ENCODE measurements at regions of chr17 and their contacts with region 1.

Region 1: GRCh38 chr17:57243171-57243948 is 13.0 kb upstream of the MSI2 start:
- DNase-seq: peak; percentile 59
- ATAC-seq: peak; percentile 84
- H3K4me3 Mint-ChIP-seq: no peak overlapping the region
- H3K27ac Mint-ChIP-seq: peak overlapping the region; percentile 30
- H3K4me1 Mint-ChIP-seq: no peaks in the 10 kb centered on the region
- H3K27me3 Mint-ChIP-seq: peaks cover 6% of the 10 kb centered on the region
- CTCF ChIP-seq: peak; percentile 89

Region 2: GRCh38 chr17:57084802-57085447 is 158.4 kb before region 1 on chr17 and contains the start of gene AKAP1:
- CTCF ChIA-PET with region 1: no interaction called
- POLR2A ChIA-PET with region 1: no interaction called
- intact Hi-C with region 1: no loop called
- DNase-seq: peak; percentile 94
- ATAC-seq: peak; percentile 89
- H3K4me3 Mint-ChIP-seq: peak within 1 kb of the TSS; percentile 90
- H3K27ac Mint-ChIP-seq: peak within 1 kb of the TSS; percentile 91
- H3K4me1 Mint-ChIP-seq: peaks cover 25% of the 10 kb centered on the region
- H3K27me3 Mint-ChIP-seq: no peaks in the 10 kb centered on the region
- CTCF ChIP-seq: no peak
- total RNA-seq, gene AKAP1: 22.5 and 26.2 TPM in 2 replicates

Region 3: GRCh38 chr17:57130761-57131461 is 112.4 kb before region 1 on chr17:
- CTCF ChIA-PET with region 1: interaction called, 4 read pairs
- POLR2A ChIA-PET with region 1: no interaction called
- intact Hi-C with region 1: loop called (anchors 1 kb)
- DNase-seq: peak; percentile 52
- ATAC-seq: peak; percentile 91
- H3K4me3 Mint-ChIP-seq: no peak overlapping the region
- H3K27ac Mint-ChIP-seq: no peak overlapping the region
- H3K4me1 Mint-ChIP-seq: peaks cover 13% of the 10 kb centered on the region
- H3K27me3 Mint-ChIP-seq: peaks cover 3% of the 10 kb centered on the region
- CTCF ChIP-seq: no peak

Region 4: DNA sequence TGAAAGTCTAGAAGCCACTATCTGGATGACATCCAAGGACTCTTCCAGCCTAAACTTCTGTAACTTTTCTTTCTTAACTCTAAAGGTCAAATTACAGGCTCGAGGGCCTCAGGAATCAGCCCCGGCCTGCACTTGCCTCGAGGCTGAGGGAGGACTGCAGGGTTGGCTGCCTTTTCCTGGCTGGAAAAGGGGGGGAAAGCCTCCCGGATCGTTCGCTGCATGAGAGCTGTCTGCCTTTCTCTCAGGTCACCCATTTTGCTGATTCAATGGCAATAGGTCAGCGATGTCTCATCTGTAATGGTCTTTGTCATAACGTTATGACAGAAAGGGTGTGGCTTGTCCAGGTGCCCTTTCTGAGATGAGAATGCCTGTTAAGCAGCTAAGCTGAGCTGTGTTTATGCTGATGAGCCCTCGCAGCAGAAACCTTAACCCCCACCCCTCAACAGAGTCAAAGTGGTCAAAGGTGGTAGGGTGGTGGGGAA is 76.6 kb before region 1 on chr17:
- CTCF ChIA-PET with region 1: no interaction called
- POLR2A ChIA-PET with region 1: no interaction called
- intact Hi-C with region 1: no loop called
- DNase-seq: no peak
- ATAC-seq: no peak
- H3K4me3 Mint-ChIP-seq: no peak overlapping the region
- H3K27ac Mint-ChIP-seq: no peak overlapping the region
- H3K4me1 Mint-ChIP-seq: no peaks in the 10 kb centered on the region
- H3K27me3 Mint-ChIP-seq: peaks cover 24% of the 10 kb centered on the region
- CTCF ChIP-seq: no peak

Region 5: GRCh38 chr17:57338257-57338914 is 95.0 kb after region 1 on chr17:
- CTCF ChIA-PET with region 1: no interaction called
- POLR2A ChIA-PET with region 1: no interaction called
- intact Hi-C with region 1: loop called (anchors 5 kb)
- DNase-seq: peak; percentile 28
- ATAC-seq: peak; percentile 95
- H3K4me3 Mint-ChIP-seq: peak overlapping the region; percentile 58
- H3K27ac Mint-ChIP-seq: peak overlapping the region; percentile 36
- H3K4me1 Mint-ChIP-seq: peaks cover 26% of the 10 kb centered on the region
- H3K27me3 Mint-ChIP-seq: no peaks in the 10 kb centered on the region
- CTCF ChIP-seq: no peak

Region 6: GRCh38 chr17:57515656-57516211 is 272.4 kb after region 1 on chr17:
- CTCF ChIA-PET with region 1: interaction called, 6 read pairs
- POLR2A ChIA-PET with region 1: no interaction called
- intact Hi-C with region 1: loop called (anchors 1 kb)
- DNase-seq: no peak
- ATAC-seq: no peak
- H3K4me3 Mint-ChIP-seq: no peak overlapping the region
- H3K27ac Mint-ChIP-seq: no peak overlapping the region
- H3K4me1 Mint-ChIP-seq: peaks cover 2% of the 10 kb centered on the region
- H3K27me3 Mint-ChIP-seq: no peaks in the 10 kb centered on the region
- CTCF ChIP-seq: no peak

Region 7: GRCh38 chr17:57739402-57740392 is 496.3 kb after region 1 on chr17:
- CTCF ChIA-PET with region 1: interaction called, 34 read pairs
- POLR2A ChIA-PET with region 1: no interaction called
- intact Hi-C with region 1: no loop called
- DNase-seq: no peak
- ATAC-seq: peak; percentile 58
- H3K4me3 Mint-ChIP-seq: no peak overlapping the region
- H3K27ac Mint-ChIP-seq: no peak overlapping the region
- H3K4me1 Mint-ChIP-seq: peaks cover 25% of the 10 kb centered on the region
- H3K27me3 Mint-ChIP-seq: no peaks in the 10 kb centered on the region
- CTCF ChIP-seq: no peak

Region 8: GRCh38 chr17:57833179-57833939 is 590.0 kb after region 1 on chr17:
- CTCF ChIA-PET with region 1: interaction called, 12 read pairs
- POLR2A ChIA-PET with region 1: no interaction called
- intact Hi-C with region 1: loop called (anchors 1 kb)
- DNase-seq: peak; percentile 37
- ATAC-seq: peak; percentile 74
- H3K4me3 Mint-ChIP-seq: no peak overlapping the region
- H3K27ac Mint-ChIP-seq: no peak overlapping the region
- H3K4me1 Mint-ChIP-seq: no peaks in the 10 kb centered on the region
- H3K27me3 Mint-ChIP-seq: no peaks in the 10 kb centered on the region
- CTCF ChIP-seq: peak; percentile 65